GM12878 (cell line): ENCODE measurements at regions of chr19 and their contacts with region 1.

Region 1: DNA sequence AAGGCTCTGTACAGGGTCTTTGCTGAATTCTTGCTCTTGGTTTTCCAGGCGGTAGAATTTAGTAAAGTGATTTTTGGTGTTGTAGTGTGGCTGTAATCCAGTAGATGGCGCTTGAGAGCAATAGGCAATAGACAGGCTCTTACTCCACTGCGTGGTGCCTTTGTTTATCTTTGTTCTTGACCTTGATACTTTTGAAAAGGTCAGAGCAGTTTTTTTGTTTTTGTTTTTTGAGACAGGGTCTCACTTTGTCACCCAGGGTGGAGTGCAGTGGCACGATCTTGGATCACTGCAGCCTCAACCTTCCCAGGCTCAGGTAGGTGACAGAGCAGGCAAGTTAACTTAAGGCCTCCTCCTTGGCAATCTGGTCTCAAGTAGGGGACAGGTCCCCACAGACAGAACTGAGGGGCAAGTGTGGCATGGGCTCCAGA is 12.2 kb upstream of the LILRA5 start:
- DNase-seq: no peak
- ATAC-seq: peak; percentile 81
- H3K4me3 ChIP-seq: no peak overlapping the region
- H3K27ac ChIP-seq: no peak overlapping the region
- H3K4me1 ChIP-seq: no peaks in the 10 kb centered on the region
- H3K27me3 ChIP-seq: no peaks in the 10 kb centered on the region
- CTCF ChIP-seq: peak; percentile 73 to 81 (median 79)
- EP300 ChIP-seq: no peak
- POLR2A ChIP-seq: no peak
- RAD21 ChIP-seq: peak; percentile 72

Region 2: GRCh38 chr19:54266133-54266532 is 59.1 kb before region 1 on chr19:
- CTCF ChIA-PET with region 1: interaction called, 20 read pairs
- POLR2A ChIA-PET with region 1: no interaction called
- RAD21 ChIA-PET with region 1: no interaction called
- SMC1A ChIA-PET with region 1: interaction called, 8 read pairs
- in situ Hi-C with region 1: no loop called
- intact Hi-C with region 1: no loop called
- DNase-seq: peak; percentile 19
- ATAC-seq: peak; percentile 90
- H3K4me3 ChIP-seq: no peak overlapping the region
- H3K27ac ChIP-seq: no peak overlapping the region
- H3K4me1 ChIP-seq: no peaks in the 10 kb centered on the region
- H3K27me3 ChIP-seq: peaks cover 0 to 3% of the 10 kb centered on the region in 2 experiments; a peak in 1 of 4 replicates
- CTCF ChIP-seq: peak; percentile 75 to 87 (median 77)
- EP300 ChIP-seq: no peak
- POLR2A ChIP-seq: no peak
- RAD21 ChIP-seq: peak; percentile 58; the same call in 1 of the 2 replicates

Region 3: DNA sequence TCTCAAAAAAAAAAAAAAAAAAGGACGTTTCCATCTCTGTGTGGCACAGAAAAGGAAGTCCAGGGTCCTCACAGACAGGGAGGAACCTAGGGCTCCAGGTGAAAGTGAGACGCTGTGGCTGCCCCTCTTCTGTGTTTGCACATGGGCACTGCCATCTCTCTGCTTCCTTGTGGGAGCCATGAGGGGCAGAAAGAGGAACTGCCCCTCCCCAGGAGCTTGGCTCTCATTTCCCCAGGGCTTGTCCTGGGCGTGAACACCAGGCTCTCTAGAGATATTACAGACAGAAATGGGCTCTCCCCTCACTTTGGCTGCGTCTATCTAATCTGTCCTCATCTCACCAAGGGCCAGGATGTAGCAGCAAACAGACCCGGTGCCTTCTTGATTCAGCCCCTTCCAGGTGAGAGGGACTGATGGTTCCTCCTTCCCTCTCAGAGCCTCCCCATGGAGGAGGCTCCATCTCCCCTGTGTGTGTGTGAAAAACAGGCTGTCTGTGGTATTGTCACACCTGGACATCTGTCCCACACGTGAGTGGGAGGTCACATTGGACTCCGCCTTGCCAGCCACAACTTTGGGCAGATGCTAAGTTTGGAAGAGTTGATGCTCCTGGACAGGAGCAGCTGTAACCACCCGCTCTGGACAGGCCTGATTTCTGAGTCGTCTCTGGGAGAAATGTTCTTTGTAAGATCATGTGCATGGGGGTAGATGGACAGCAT is 14.6 kb after region 1 on chr19:
- CTCF ChIA-PET with region 1: interaction called, 17 read pairs
- POLR2A ChIA-PET with region 1: interaction called, 3 read pairs
- RAD21 ChIA-PET with region 1: interaction called, 5 read pairs
- SMC1A ChIA-PET with region 1: interaction called, 31 read pairs
- in situ Hi-C with region 1: no loop called
- intact Hi-C with region 1: no loop called
- DNase-seq: no peak
- ATAC-seq: peak; percentile 71
- H3K4me3 ChIP-seq: no peak overlapping the region
- H3K27ac ChIP-seq: no peak overlapping the region
- H3K4me1 ChIP-seq: no peaks in the 10 kb centered on the region
- H3K27me3 ChIP-seq: 0 out of 4 replicates have a peak, but pooled peaks cover 0 to 2% of the 10 kb centered on the region in 2 experiments
- CTCF ChIP-seq: no peak
- EP300 ChIP-seq: no peak
- POLR2A ChIP-seq: no peak
- RAD21 ChIP-seq: no peak

Region 4: DNA sequence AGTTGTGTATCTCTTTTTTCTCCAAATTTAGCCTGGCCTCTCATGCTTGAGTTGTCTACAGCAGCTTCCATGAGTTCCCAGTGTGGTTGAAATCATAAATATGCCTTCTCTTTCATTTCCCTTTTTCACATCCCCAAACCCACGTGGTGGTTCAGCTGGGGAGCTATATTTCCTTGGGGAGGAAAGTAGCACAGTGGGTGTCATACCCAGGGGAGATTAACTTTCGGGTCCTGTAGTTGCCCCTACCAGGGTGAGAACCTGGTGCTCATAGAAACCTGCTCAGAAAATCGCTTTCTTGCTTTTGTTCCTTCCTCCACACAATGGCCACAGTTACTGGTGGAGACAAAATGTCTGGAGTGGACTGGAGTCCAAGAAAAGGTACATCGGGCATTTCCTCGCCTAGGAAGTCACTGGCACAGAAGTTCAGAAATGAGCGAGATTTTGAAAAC is 20.8 kb after region 1 on chr19:
- CTCF ChIA-PET with region 1: interaction called, 171 read pairs
- POLR2A ChIA-PET with region 1: interaction called, 11 read pairs
- RAD21 ChIA-PET with region 1: interaction called, 18 read pairs
- SMC1A ChIA-PET with region 1: interaction called, 31 read pairs
- in situ Hi-C with region 1: no loop called
- intact Hi-C with region 1: no loop called
- DNase-seq: peak; percentile 74
- ATAC-seq: peak; percentile 98
- H3K4me3 ChIP-seq: no peak overlapping the region
- H3K27ac ChIP-seq: no peak overlapping the region
- H3K4me1 ChIP-seq: peaks cover 5% of the 10 kb centered on the region
- H3K27me3 ChIP-seq: 0 out of 4 replicates have a peak, but pooled peaks cover 0 to 3% of the 10 kb centered on the region in 2 experiments
- CTCF ChIP-seq: no peak
- EP300 ChIP-seq: peak; percentile 86 to 87; a peak in 3 of 4 replicates
- POLR2A ChIP-seq: no peak
- RAD21 ChIP-seq: peak; percentile 2; the same call in 1 of the 2 replicates

Region 5: GRCh38 chr19:54352041-54352440 is 26.8 kb after region 1 on chr19:
- CTCF ChIA-PET with region 1: interaction called, 171 read pairs
- POLR2A ChIA-PET with region 1: interaction called, 4 read pairs
- RAD21 ChIA-PET with region 1: interaction called, 18 read pairs
- SMC1A ChIA-PET with region 1: interaction called, 41 read pairs
- in situ Hi-C with region 1: no loop called
- intact Hi-C with region 1: loop called (anchors 1 kb)
- DNase-seq: no peak
- ATAC-seq: peak; percentile 59
- H3K4me3 ChIP-seq: no peak overlapping the region
- H3K27ac ChIP-seq: no peak overlapping the region
- H3K4me1 ChIP-seq: no peaks in the 10 kb centered on the region
- H3K27me3 ChIP-seq: no peaks in the 10 kb centered on the region
- CTCF ChIP-seq: no peak
- EP300 ChIP-seq: no peak
- POLR2A ChIP-seq: no peak
- RAD21 ChIP-seq: no peak

Region 6: DNA sequence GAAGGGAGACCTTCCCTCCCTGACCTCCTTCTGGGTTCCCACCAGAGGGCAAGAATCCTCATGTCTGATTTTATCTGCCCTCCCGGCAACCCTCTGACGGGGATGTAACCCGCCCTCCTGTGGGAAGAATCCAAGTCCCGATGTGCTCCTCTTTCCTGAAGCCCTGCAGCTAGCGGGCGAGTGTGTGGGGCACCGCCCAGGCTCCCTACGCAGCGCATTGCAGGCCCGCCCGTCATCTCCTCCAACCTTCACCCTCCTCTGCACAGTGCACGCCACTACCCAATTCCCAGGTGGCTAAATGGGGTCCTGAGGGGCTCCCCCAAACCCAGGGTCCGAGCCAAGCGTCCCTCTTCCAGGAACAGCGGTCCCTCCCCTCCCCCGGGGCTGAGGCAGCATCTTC is 32.2 kb after region 1 on chr19:
- CTCF ChIA-PET with region 1: interaction called, 171 read pairs
- POLR2A ChIA-PET with region 1: interaction called, 4 read pairs
- RAD21 ChIA-PET with region 1: interaction called, 10 read pairs
- SMC1A ChIA-PET with region 1: interaction called, 41 read pairs
- in situ Hi-C with region 1: no loop called
- intact Hi-C with region 1: loop called (anchors 1 kb)
- DNase-seq: no peak
- ATAC-seq: no peak
- H3K4me3 ChIP-seq: no peak overlapping the region
- H3K27ac ChIP-seq: no peak overlapping the region
- H3K4me1 ChIP-seq: no peaks in the 10 kb centered on the region
- H3K27me3 ChIP-seq: no peaks in the 10 kb centered on the region
- CTCF ChIP-seq: no peak
- EP300 ChIP-seq: no peak
- POLR2A ChIP-seq: no peak
- RAD21 ChIP-seq: no peak

Region 7: GRCh38 chr19:54379187-54379678 is 54.0 kb after region 1 on chr19:
- CTCF ChIA-PET with region 1: interaction called, 13 read pairs
- POLR2A ChIA-PET with region 1: no interaction called
- RAD21 ChIA-PET with region 1: interaction called, 5 read pairs
- SMC1A ChIA-PET with region 1: interaction called, 4 read pairs
- in situ Hi-C with region 1: no loop called
- intact Hi-C with region 1: no loop called
- DNase-seq: no peak
- ATAC-seq: no peak
- H3K4me3 ChIP-seq: no peak overlapping the region
- H3K27ac ChIP-seq: no peak overlapping the region
- H3K4me1 ChIP-seq: peaks cover 8% of the 10 kb centered on the region
- H3K27me3 ChIP-seq: no peaks in the 10 kb centered on the region
- CTCF ChIP-seq: no peak
- EP300 ChIP-seq: no peak
- POLR2A ChIP-seq: no peak
- RAD21 ChIP-seq: no peak